ENCODE measurements at regions of chr6 and their contacts with region 1.

Region 1: GRCh38 chr6:35297601-35298481 is at the start of gene DEF6:
- DNase-seq: peak; percentile 85 to 89 (median 86)
- H3K4me3 ChIP-seq: peak within 1 kb of the TSS; percentile 90 to 95
- H3K4me3 Mint-ChIP-seq: peak within 1 kb of the TSS; percentile 80 to 96 (median 94)
- H3K27ac ChIP-seq: peak within 1 kb of the TSS; percentile 88
- H3K27ac Mint-ChIP-seq: peak within 1 kb of the TSS; percentile 91 to 99 (median 98)
- H3K4me1 ChIP-seq: peaks cover 49% of the 10 kb centered on the region
- H3K4me1 Mint-ChIP-seq: peaks cover 23 to 57% (median 44%) of the 10 kb centered on the region in 4 donors
- H3K27me3 ChIP-seq: no peaks in the 10 kb centered on the region
- H3K27me3 Mint-ChIP-seq: no peaks in the 10 kb centered on the region
- total RNA-seq, gene DEF6: 231 to 236 TPM

Region 2: DNA sequence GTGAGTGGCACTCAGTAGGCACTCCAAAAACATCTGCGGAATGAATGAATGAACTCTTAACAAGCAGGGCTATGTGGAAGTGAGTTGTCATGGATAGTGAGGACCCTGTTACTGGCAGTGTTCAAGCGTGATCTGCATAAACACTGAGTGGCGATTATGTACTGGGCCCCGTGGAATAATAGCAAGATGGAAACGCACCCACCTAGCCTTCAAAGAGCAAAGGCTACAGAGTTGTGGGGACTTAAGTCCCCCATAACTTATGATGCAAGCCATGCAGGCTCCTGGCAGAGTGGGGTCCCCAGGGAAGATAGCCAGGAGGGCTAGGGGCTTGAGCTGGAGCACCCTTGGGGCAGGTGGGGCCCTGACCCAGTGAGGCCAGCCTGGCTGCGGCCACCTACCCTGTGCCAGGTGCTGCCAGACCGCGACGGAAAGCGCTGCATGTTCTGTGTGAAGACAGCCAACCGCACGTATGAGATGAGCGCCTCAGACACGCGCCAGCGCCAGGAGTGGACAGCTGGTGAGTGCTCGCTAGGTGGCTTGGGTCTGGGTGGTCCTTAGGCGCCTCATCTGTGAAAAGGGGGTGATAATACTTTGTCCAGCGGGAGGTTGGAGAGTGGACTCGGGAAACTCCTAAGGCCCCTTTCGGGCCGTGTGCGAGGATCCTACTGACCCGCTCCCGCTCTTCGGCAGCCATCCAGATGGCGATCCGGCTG is 19.8 kb after region 1 on chr6:
- CTCF ChIA-PET with region 1: interaction called, 429 read pairs
- POLR2A ChIA-PET with region 1: interaction called, 805 read pairs
- intact Hi-C with region 1: loop called (anchors 1 kb)
- DNase-seq: no peak
- H3K4me3 ChIP-seq: no peak overlapping the region
- H3K4me3 Mint-ChIP-seq: no peak overlapping the region
- H3K27ac ChIP-seq: peak overlapping the region; percentile 7
- H3K27ac Mint-ChIP-seq: peak overlapping the region; percentile 8 to 88 (median 63)
- H3K4me1 ChIP-seq: peaks cover 36% of the 10 kb centered on the region
- H3K4me1 Mint-ChIP-seq: peaks cover 31 to 58% (median 47%) of the 10 kb centered on the region in 4 donors
- H3K27me3 ChIP-seq: no peaks in the 10 kb centered on the region
- H3K27me3 Mint-ChIP-seq: no peaks in the 10 kb centered on the region

Region 3: DNA sequence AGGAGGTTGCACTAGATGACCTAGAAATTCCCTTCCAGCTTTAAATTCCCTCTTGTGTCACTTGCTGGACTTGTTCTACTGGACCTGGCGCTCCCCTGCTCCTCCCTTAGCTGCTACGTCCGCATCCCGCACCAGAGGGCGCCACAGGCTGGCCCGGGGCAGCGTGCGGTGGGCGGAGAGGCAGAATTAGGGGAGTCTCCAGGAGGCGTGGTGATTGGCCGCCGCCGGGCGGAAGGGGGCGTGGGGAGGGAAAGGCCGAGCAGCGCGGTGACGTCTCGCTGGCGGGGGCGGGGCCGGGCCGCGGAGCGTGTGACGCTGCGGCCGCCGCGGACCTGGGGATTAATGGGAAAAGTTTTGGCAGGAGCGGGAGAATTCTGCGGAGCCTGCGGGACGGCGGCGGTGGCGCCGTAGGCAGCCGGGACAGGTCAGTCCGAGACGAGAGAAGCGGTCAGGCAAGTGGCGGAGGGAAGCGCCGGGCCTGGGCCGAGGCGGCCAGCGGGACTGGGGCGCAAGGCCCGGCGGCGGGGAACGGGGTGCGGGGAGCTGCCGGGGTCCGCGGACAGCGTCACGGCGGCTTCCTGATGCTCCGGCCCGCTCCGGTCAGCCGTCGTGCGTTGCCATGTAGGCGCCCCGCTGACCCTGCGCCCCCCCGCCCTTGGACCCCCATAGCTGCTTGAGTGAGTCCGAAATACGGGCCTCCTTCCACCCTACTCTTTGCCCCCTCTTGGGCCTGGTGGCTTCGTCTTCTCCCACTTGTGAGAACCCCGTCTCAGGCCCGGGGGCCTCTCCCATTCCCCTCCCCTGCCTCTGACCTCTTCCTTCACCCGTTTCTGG is 44.6 kb after region 1 on chr6 and contains the start of gene PPARD:
- CTCF ChIA-PET with region 1: interaction called, 40 read pairs
- POLR2A ChIA-PET with region 1: interaction called, 29 read pairs
- intact Hi-C with region 1: loop called (anchors 1 kb)
- DNase-seq: peak; percentile 94 to 98 (median 95)
- H3K4me3 ChIP-seq: peak within 1 kb of the TSS; percentile 50 to 97
- H3K4me3 Mint-ChIP-seq: peak within 1 kb of the TSS; percentile 87 to 99 (median 96)
- H3K27ac ChIP-seq: peak within 1 kb of the TSS; percentile 86
- H3K27ac Mint-ChIP-seq: peak within 1 kb of the TSS; percentile 87 to 99 (median 96)
- H3K4me1 ChIP-seq: peaks cover 52% of the 10 kb centered on the region
- H3K4me1 Mint-ChIP-seq: peaks cover 37 to 60% (median 51%) of the 10 kb centered on the region in 4 donors
- H3K27me3 ChIP-seq: no peaks in the 10 kb centered on the region
- H3K27me3 Mint-ChIP-seq: no peaks in the 10 kb centered on the region
- total RNA-seq, gene PPARD: 37.2 to 38.7 TPM

Region 4: GRCh38 chr6:35452186-35453090 is 154.6 kb after region 1 on chr6 and contains the start of gene FANCE:
- CTCF ChIA-PET with region 1: interaction called, 158 read pairs
- POLR2A ChIA-PET with region 1: interaction called, 39 read pairs
- intact Hi-C with region 1: loop called (anchors 1 kb)
- DNase-seq: peak; percentile 77 to 90 (median 81)
- H3K4me3 ChIP-seq: peak within 1 kb of the TSS; percentile 0 to 66
- H3K4me3 Mint-ChIP-seq: peak within 1 kb of the TSS; percentile 84 to 91 (median 87)
- H3K27ac ChIP-seq: peak within 1 kb of the TSS; percentile 59
- H3K27ac Mint-ChIP-seq: peak within 1 kb of the TSS; percentile 54 to 94 (median 89)
- H3K4me1 ChIP-seq: peaks cover 40% of the 10 kb centered on the region
- H3K4me1 Mint-ChIP-seq: peaks cover 29 to 53% (median 39%) of the 10 kb centered on the region in 4 donors
- H3K27me3 ChIP-seq: no peaks in the 10 kb centered on the region
- H3K27me3 Mint-ChIP-seq: no peaks in the 10 kb centered on the region
- total RNA-seq, gene FANCE: 8.9 to 9.0 TPM

Region 5: GRCh38 chr6:35522660-35523658 is 225.1 kb after region 1 on chr6:
- CTCF ChIA-PET with region 1: interaction called, 12 read pairs
- POLR2A ChIA-PET with region 1: no interaction called
- intact Hi-C with region 1: no loop called
- DNase-seq: peak; percentile 76 to 84 (median 82)
- H3K4me3 ChIP-seq: peak overlapping the region in 1 of 2 donors; percentile 41
- H3K4me3 Mint-ChIP-seq: peak overlapping the region; percentile 20 to 81 (median 75)
- H3K27ac ChIP-seq: no peak overlapping the region
- H3K27ac Mint-ChIP-seq: peak overlapping the region; percentile 76 to 93 (median 86)
- H3K4me1 ChIP-seq: peaks cover 21% of the 10 kb centered on the region
- H3K4me1 Mint-ChIP-seq: peaks cover 14 to 34% (median 21%) of the 10 kb centered on the region in 4 donors
- H3K27me3 ChIP-seq: no peaks in the 10 kb centered on the region
- H3K27me3 Mint-ChIP-seq: no peaks in the 10 kb centered on the region